ENCODE measurements at regions of chr5 and their contacts with region 1.

Region 1: GRCh38 chr5:103258368-103258956 is at the start of gene MACIR:
- DNase-seq: peak; percentile 99
- ATAC-seq: peak; percentile 98
- H3K4me3 ChIP-seq: peak within 1 kb of the TSS; percentile 68 to 80
- H3K27ac ChIP-seq: peak within 1 kb of the TSS in 1 of 2 donors; percentile 60
- H3K4me1 ChIP-seq: no peaks in the 10 kb centered on the region
- H3K27me3 ChIP-seq: no peaks in the 10 kb centered on the region
- total RNA-seq, gene MACIR: 3.8 to 6.2 TPM

Region 2: DNA sequence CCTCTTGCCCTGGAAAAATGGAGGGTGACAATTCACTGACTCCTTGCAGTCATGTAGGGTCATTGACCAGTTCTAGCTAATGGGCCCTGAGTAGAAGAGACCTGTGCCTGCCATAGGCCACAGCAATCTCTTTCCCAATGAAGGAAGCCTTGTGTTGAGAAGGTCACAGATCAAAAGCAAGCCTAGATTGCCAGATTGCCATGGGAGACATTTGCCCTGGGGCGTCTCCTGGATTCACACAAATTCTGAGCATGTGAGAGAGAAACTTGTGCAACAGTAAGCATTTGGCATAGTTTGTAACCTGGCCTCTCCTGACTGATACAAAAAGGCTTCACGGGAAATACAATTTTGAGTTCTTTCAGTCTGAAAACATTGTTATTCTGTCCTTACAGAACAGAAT is 156.2 kb after region 1 on chr5:
- intact Hi-C with region 1: no loop called
- DNase-seq: no peak
- ATAC-seq: no peak
- H3K4me3 ChIP-seq: no peak overlapping the region
- H3K27ac ChIP-seq: no peak overlapping the region
- H3K4me1 ChIP-seq: no peaks in the 10 kb centered on the region
- H3K27me3 ChIP-seq: no peaks in the 10 kb centered on the region

Region 3: GRCh38 chr5:103439007-103439406 is 180.5 kb after region 1 on chr5:
- intact Hi-C with region 1: no loop called
- DNase-seq: no peak
- ATAC-seq: no peak
- H3K4me3 ChIP-seq: no peak overlapping the region
- H3K27ac ChIP-seq: no peak overlapping the region
- H3K4me1 ChIP-seq: no peaks in the 10 kb centered on the region
- H3K27me3 ChIP-seq: no peaks in the 10 kb centered on the region

Region 4: DNA sequence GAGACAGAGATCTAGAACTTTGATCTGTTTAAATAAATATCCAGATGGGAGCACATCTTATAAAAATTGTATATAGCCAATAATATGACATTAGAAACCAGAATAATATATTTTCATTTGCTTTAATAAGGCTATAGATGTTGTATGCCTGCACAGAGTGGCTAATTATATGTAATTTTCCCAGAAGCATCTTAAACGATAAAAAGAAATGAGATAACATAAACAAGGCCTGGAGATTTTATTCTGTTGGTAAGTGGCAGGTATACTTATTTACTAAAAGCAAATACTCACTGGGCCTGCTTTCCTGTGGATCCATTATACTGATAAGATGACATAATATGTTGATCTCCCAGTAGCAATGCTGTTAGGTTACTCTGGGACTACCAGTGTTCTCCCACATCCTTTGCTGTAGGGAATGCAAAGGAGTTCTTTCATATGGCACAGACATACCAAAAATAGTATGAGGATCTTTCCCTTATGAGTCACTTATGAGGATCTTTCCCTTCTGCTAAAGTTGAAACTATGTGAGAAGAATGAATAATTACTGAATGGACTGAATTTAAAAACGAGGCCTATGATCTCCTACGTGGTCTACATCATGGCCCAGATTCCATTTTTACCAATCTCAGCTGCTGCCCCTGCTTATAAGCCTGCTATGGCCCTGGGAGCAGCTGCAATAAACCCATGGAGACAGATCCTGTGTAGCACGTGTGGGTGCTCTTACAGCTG is 192.0 kb after region 1 on chr5:
- intact Hi-C with region 1: loop called in 1 of 2 experiments (anchors 5 kb)
- DNase-seq: no peak
- ATAC-seq: no peak
- H3K4me3 ChIP-seq: no peak overlapping the region
- H3K27ac ChIP-seq: peak overlapping the region in 1 of 2 donors; percentile 44
- H3K4me1 ChIP-seq: peaks cover 0 to 4% of the 10 kb centered on the region in 2 donors
- H3K27me3 ChIP-seq: no peaks in the 10 kb centered on the region